Activated T-helper 1 cell treated with anti-CD3 and anti-CD28 coated beads, Interleukin-12 subunit alpha, Interleukin-12 subunit beta, Interleukin-2, Interleukin-4 antibody, amounts not matched to agents 30 ng/mL and 10 ng/mL and 1 ng/mL, durations not matched to agents 14 hours and 24 hours and 36 hours (primary cell): ENCODE measurements at regions of chr10 and their contacts with region 1.

Region 1: GRCh38 chr10:60186315-60187071 is 203.2 kb downstream of the ANK3 start:
- DNase-seq: no peak
- H3K4me3 Mint-ChIP-seq: no peak overlapping the region
- H3K27ac Mint-ChIP-seq: no peak overlapping the region
- H3K4me1 Mint-ChIP-seq: peaks cover 19% of the 10 kb centered on the region
- H3K27me3 Mint-ChIP-seq: no peaks in the 10 kb centered on the region

Region 2: GRCh38 chr10:59646150-59646549 is 540.3 kb before region 1 on chr10:
- intact Hi-C with region 1: no loop called
- DNase-seq: no peak
- H3K4me3 Mint-ChIP-seq: no peak overlapping the region
- H3K27ac Mint-ChIP-seq: no peak overlapping the region
- H3K4me1 Mint-ChIP-seq: peaks cover 5% of the 10 kb centered on the region
- H3K27me3 Mint-ChIP-seq: peaks cover 8% of the 10 kb centered on the region

Region 3: DNA sequence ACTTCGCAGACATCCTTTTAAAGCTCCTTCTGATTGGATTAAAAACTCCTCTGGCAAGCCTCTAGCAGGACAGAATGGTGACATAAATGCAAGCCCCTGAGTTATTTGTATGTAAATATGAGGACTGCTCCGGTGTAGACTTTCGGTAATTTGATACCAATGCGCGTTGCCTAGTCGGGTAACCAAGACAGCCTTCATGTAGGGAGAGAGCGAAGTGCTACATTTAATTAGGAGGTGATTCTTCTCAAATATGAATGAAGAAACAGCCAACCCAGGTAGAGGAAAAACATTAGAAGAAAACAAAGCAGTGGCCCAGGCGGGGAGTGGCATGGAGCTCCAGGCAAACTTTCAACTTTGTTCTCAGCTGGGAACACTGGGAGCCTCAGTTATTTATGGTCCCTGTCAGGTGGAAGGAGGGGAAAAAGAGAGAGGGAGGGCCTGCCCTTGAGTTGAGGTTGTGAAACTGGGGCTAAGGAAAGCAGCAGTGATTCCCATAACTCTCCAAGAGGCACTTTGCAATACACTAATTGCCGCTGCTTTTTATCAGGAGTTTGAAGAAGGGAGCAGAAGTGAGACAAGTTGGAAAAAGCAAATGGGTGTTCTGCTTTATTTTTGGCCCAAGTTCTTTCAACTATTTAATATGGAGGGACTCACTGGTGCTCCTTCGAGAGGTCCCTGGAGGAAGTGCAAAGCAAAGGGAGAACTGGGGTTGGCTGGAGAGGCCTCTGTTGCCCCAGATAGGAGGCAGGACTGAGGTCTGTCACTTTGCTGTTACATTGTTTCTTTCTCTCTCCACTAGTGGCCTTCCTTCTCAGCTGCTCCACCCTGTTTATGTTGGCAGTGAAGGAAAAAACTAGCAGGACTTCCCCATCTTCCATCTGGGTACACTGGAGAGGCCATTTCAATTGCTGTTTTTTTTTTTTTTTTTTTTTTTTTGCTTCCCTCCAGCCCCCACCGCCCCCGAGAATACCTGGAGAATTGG is 45.6 kb before region 1 on chr10:
- intact Hi-C with region 1: loop called (anchors 5 kb)
- DNase-seq: no peak
- H3K4me3 Mint-ChIP-seq: no peak overlapping the region
- H3K27ac Mint-ChIP-seq: no peak overlapping the region
- H3K4me1 Mint-ChIP-seq: no peaks in the 10 kb centered on the region
- H3K27me3 Mint-ChIP-seq: no peaks in the 10 kb centered on the region